ENCODE measurements at regions of chr20 and their contacts with region 1.

Region 1: DNA sequence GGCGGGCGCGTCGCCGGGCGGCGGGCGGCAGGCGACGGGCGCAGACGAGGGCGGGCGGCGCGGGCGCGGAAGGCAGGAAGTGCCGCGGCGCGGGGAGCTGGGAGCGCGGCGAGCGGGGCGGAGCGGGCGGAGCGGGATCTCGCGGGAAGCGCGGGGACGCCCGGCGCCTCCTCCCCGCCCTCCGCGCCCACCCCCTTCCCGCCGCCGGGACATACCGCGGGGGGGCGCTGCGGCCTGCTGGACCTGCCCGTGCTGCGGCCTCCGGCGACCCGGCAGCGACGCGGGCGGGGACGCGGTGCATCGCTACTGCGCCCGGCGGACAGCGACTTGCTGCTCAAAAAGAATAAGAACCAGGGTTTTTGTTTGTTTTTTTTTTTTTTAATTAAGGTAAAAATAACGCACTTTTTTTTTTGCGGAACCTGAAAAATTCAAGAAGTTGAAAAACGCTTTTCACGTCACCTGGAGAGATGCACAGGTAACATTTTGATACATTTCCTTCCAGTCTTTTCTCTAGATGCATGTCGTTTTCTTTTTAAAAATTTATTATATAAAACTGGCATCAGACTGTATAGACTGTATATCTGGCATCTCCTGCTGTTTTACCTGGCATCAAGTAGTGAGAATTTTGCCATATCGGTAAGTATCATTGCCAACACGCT is at the start of gene CENPB:
- DNase-seq: no peak
- H3K4me3 ChIP-seq: peak within 1 kb of the TSS; percentile 79
- H3K27ac ChIP-seq: peak within 1 kb of the TSS; percentile 21
- H3K27me3 ChIP-seq: no peaks in the 10 kb centered on the region
- CTCF ChIP-seq: peak; percentile 51
- polyA plus RNA-seq, gene CENPB: 29.7 and 37.0 TPM in 2 replicates

Region 2: DNA sequence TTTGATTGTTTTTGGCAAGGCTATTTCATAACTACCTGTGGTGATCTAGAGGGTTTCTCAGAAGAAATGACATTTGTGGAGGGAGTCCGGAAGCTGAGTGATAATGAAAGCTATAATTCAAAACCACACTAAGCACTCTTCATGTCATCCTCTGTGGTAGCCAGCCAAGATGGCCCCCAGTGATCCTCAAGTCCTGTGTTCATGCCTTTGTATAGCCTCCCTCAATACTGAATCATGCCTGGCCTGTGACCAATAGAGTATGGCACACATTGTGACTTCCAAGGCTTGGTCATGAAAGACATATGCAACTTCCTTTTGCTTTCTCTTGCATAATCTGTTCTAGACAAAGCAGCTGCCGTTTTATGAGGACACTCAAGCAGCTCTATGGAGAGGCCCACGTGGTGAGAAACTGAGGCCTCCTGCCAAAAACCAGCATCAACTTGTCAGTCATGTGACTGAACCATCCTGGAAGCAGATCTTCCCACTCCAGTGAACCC is 366.5 kb before region 1 on chr20:
- CTCF ChIA-PET with region 1: no interaction called
- POLR2A ChIA-PET with region 1: no interaction called
- DNase-seq: no peak
- H3K4me3 ChIP-seq: no peak overlapping the region
- H3K27ac ChIP-seq: no peak overlapping the region
- H3K27me3 ChIP-seq: peaks cover 10% of the 10 kb centered on the region
- CTCF ChIP-seq: no peak

Region 3: GRCh38 chr20:3539311-3540107 is 247.3 kb before region 1 on chr20:
- CTCF ChIA-PET with region 1: no interaction called
- POLR2A ChIA-PET with region 1: no interaction called
- DNase-seq: no peak
- H3K4me3 ChIP-seq: no peak overlapping the region
- H3K27ac ChIP-seq: no peak overlapping the region
- H3K27me3 ChIP-seq: no peaks in the 10 kb centered on the region
- CTCF ChIP-seq: no peak

Region 4: DNA sequence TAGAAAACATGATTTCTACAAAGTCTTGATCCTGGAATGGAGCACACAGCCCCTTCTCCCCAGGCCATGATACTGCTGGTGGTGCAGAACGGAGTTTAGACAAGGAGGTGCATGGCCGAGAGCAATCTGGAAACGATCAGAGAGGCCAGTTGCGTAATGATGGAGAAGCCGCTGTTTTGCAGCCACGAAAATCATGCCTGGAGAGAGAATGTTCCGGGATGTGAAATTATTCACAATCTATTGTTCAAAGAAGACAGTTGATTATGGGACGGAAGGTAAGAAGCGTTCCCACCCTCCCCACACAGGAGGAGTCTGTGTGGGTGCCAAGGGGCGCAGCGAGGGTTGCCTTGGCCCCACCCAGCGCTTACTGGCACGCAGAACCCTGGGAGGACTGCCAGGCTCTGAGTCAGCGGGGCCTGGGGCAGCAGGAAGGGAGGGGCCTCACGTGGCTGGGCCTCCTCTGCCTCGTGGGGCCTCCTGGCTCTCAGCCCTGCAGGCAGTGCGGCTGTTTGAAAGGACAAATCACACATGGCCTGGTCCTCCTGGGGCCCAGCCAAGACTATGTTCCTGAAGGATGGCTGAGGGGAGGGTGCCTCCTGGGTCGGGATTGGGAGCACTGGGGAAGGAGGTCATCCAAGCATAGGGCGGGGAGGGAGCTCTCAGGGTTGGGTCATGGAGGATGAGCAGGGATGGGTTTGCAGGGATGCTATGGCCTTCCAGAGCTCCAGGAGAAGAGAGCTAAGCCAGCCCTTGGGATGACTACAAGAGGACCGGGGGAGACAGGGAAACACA is 24.9 kb after region 1 on chr20:
- CTCF ChIA-PET with region 1: interaction called, 11 read pairs
- POLR2A ChIA-PET with region 1: interaction called, 12 read pairs
- DNase-seq: peak; percentile 99
- H3K4me3 ChIP-seq: peak overlapping the region; percentile 46
- H3K27ac ChIP-seq: peak overlapping the region; percentile 94
- H3K27me3 ChIP-seq: no peaks in the 10 kb centered on the region
- CTCF ChIP-seq: no peak

Region 5: DNA sequence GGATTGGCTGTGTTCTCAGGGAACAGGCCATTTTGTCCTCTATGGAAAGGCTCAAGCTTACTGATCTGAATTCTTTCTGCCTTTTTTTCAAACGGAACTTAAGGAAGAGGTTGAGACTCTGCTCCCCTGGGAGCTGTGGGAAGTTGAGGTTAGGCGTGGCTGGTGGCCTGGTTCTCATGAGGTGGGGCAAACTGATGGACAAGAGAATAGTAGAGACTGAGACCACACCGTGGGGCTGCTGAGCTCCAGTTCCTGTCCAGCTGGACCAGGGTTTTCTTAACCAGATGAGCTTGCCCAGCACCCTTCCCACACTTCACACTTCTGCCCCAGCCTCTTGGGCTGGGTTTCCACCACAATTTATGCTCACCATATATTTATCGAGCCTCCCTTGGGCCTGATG is 39.6 kb after region 1 on chr20:
- CTCF ChIA-PET with region 1: interaction called, 87 read pairs
- POLR2A ChIA-PET with region 1: interaction called, 19 read pairs
- DNase-seq: no peak
- H3K4me3 ChIP-seq: no peak overlapping the region
- H3K27ac ChIP-seq: no peak overlapping the region
- H3K27me3 ChIP-seq: no peaks in the 10 kb centered on the region
- CTCF ChIP-seq: no peak

Region 6: GRCh38 chr20:3854462-3854871 is 67.7 kb after region 1 on chr20:
- CTCF ChIA-PET with region 1: interaction called, 19 read pairs
- POLR2A ChIA-PET with region 1: interaction called, 6 read pairs
- DNase-seq: no peak
- H3K4me3 ChIP-seq: no peak overlapping the region
- H3K27ac ChIP-seq: no peak overlapping the region
- H3K27me3 ChIP-seq: no peaks in the 10 kb centered on the region
- CTCF ChIP-seq: no peak

Measured in AG04450 (cell line).